Mammary epithelial cell (primary cell): ENCODE measurements at regions of chr3 and their contacts with region 1.

Region 1: DNA sequence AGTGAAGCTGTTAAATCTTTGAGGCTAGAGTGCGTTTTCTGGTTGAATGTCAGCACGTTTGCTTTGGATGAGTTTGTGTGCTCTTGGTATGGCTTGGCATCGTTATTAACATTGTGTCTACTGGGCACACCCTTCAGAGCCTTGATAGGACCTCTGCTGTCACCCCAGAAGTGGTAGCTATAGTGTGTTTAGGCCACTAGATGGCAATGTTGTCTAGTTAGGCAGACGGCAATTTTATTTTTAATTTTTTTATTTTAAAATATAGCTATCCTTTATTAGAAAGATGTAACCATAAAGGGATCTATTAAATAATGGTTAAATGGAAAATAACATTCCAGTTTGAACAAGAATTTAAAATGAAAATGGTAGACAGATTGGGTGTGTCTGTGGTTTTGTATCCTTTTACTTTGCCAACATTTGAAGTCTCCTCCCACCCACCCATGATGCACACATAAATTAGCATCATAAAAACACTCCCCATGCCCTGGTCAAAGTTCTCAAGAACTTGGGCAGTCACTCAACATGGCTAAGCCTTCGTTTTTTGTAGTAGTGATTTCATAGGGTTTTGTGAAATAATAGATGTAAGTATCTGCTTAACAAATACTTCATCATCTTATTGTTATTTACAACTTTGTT is 200.7 kb downstream of the KCNH8 start:
- DNase-seq: peak; percentile 9
- H3K4me3 ChIP-seq: no peak overlapping the region
- H3K27ac ChIP-seq: no peak overlapping the region
- H3K4me1 ChIP-seq: no peaks in the 10 kb centered on the region
- H3K27me3 ChIP-seq: no peaks in the 10 kb centered on the region
- CTCF ChIP-seq: peak; percentile 69 to 74

Region 2: GRCh38 chr3:19065027-19065426 is 284.0 kb before region 1 on chr3:
- CTCF ChIA-PET with region 1: no interaction called
- dilution Hi-C with region 1: no loop called
- in situ Hi-C with region 1: no loop called
- intact Hi-C with region 1: loop called (anchors 10 kb)
- DNase-seq: no peak
- H3K4me3 ChIP-seq: no peak overlapping the region
- H3K27ac ChIP-seq: no peak overlapping the region
- H3K4me1 ChIP-seq: no peaks in the 10 kb centered on the region
- H3K27me3 ChIP-seq: no peaks in the 10 kb centered on the region
- CTCF ChIP-seq: no peak

Region 3: DNA sequence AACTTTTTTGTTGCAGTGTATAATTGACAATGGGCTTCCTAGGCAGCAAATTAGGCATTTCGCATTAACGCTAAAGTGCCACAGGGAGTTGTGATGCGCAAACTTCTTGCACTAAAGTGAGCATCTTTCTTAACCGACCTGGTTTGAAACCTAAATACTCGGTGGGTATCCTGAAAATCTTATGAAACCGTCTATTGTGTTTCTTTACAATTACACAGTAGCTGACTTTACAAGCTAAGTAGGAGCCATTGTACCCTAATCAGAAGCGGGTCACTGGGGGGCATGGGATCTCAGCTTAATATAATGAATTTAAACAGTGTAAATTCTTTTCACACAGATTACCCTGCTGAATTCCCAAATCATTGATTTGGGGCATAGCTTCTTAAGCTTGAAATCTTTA is 127.2 kb after region 1 on chr3:
- CTCF ChIA-PET with region 1: no interaction called
- dilution Hi-C with region 1: no loop called
- in situ Hi-C with region 1: no loop called
- intact Hi-C with region 1: no loop called
- DNase-seq: no peak
- H3K4me3 ChIP-seq: no peak overlapping the region
- H3K27ac ChIP-seq: no peak overlapping the region
- H3K4me1 ChIP-seq: no peaks in the 10 kb centered on the region
- H3K27me3 ChIP-seq: no peaks in the 10 kb centered on the region
- CTCF ChIP-seq: no peak

Region 4: DNA sequence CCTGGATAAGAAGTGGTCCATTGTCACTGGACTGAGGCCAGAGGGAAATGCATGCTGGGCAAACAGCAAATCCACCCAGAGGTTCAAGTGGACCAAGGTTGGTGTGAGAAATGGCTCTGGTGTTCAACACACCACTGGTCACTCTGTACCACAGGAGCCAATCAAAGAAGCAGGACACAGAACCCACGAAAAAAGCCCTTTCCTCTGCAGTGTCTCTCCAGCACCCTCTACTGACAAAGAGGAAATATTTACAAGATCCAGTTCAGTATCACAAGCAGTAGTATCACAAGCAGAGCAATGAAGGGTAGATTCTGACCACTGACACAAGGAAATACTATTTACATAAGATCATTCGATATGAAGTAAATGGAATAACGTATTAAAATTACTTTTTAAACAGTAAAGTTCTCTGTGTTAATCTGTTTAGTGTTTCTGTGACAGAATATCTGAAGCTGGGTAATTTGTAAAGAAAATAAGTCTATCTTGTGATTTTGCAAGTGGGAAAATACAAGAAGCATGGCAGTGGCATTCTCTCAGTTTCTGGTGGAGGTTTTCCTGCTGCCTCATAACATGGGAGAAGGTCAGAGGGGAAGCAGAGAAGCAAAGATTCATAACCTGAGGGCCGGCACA is 194.3 kb after region 1 on chr3:
- CTCF ChIA-PET with region 1: interaction called, 5 read pairs
- dilution Hi-C with region 1: no loop called
- in situ Hi-C with region 1: loop called in 1 of 2 experiments (anchors 5 kb)
- intact Hi-C with region 1: loop called (anchors 1 kb)
- DNase-seq: peak; percentile 29
- H3K4me3 ChIP-seq: no peak overlapping the region
- H3K27ac ChIP-seq: no peak overlapping the region
- H3K4me1 ChIP-seq: no peaks in the 10 kb centered on the region
- H3K27me3 ChIP-seq: no peaks in the 10 kb centered on the region
- CTCF ChIP-seq: peak; percentile 47 to 84

Region 5: GRCh38 chr3:19877656-19878055 is 528.6 kb after region 1 on chr3:
- CTCF ChIA-PET with region 1: no interaction called
- dilution Hi-C with region 1: no loop called
- in situ Hi-C with region 1: loop called (anchors 10 to 25 kb)
- intact Hi-C with region 1: no loop called
- DNase-seq: no peak
- H3K4me3 ChIP-seq: no peak overlapping the region
- H3K27ac ChIP-seq: no peak overlapping the region
- H3K4me1 ChIP-seq: no peaks in the 10 kb centered on the region
- H3K27me3 ChIP-seq: peaks cover 2% of the 10 kb centered on the region
- CTCF ChIP-seq: no peak